GM10248 (cell line): ENCODE measurements at regions of chr1 and their contacts with region 1.

Region 1: DNA sequence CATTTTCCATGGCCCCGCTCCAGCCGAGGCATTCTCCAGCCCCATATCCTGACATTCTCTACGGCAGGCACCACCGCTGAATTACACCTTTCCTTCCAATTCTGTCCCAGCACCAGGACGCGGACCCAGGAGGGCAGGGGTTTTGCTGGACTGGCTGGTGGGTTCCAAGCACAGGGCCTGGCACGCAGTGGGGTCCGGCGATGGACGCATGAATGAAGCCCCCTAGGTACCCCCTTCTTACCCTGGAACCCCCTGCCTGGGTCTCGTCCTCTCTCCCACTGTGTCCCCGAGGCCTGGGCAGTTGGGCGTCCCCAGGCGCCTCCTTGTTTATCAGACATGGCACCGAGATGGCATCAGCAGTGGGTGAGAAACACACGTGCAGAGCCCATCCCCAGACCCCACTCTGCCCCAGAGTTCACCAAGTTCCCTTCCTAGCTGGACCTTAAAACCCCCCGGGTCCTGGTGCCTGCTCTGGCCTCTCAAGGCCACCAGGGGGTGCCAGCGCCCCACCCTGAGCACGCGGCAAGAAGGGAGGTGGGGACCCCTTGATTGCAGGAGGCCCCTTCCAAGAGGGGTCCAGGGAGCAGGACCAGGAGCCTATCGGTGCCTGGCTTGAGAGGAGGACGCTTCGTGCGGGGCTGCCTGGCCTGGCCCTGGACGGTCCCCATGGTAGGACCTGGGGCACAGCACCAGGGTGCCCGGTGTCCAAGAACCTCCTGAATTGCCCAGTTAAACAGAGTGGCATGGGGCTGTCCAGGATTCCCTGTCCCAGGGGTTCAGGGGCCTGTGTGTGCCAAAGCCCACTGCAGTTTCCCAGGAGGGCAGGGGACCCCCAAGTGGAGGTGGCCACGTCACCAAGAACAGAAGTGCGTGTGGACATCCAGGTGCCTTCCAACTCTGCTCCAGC is 46.1 kb downstream of the MEGF6 start:
- DNase-seq: peak; percentile 82
- CTCF ChIP-seq: peak; percentile 93

Region 2: GRCh38 chr1:3530926-3531818 is 34.0 kb before region 1 on chr1:
- CTCF ChIA-PET with region 1: no interaction called
- POLR2A ChIA-PET with region 1: no interaction called
- DNase-seq: no peak
- CTCF ChIP-seq: no peak

Region 3: DNA sequence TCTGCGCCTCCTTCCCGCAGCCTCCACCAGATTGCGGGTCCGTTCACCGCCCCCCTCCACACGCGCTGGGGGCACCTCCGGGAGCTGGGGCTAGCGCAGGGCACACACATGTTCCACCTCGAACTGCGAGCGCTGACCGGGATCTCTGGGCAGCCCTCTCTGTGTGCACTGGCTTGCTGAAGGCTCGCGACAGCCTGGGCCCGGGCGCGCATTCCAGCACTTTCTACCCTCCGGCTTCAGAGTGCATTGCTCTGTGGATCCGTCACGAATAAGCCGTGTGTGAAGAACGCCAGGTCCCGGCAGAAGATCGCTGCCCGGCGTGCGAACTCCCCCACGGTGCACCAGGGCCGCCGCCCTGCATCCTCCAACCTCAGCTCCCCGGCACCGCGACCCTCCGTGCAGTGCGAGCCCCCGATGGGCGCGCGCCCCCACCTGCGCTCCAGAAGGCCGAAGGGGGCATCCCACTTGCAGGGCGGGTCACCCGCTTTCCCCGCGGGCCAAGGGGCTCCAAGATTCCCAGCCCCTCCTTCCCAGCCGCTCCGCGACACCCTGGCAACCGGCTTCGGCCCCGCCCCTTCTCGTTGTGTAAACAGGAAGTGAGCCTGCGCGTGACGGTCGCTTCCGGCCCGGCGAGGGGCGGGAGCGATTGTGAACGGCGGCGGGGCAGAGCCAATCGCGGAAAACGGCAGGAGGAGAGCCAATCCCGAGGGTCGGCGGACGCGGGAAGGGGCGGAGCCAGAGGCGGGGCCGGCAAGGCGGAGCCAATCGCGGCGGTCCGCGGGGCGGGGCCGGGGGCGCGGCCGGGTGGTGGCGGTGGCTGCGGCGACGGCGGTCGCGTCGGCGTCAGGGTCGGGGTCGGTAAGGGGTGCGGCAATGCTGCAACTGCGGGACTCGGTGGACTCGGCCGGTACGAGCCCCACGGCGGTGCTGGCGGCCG is 59.3 kb after region 1 on chr1 and contains the start of gene TPRG1L:
- CTCF ChIA-PET with region 1: interaction called, 71 read pairs
- POLR2A ChIA-PET with region 1: no interaction called
- DNase-seq: peak; percentile 100
- CTCF ChIP-seq: no peak

Region 4: GRCh38 chr1:3727042-3727824 is 162.1 kb after region 1 on chr1:
- CTCF ChIA-PET with region 1: interaction called, 16 read pairs
- POLR2A ChIA-PET with region 1: no interaction called
- DNase-seq: peak; percentile 80
- CTCF ChIP-seq: peak; percentile 51